ENCODE measurements at regions of chr1 and their contacts with region 1.

Region 1: DNA sequence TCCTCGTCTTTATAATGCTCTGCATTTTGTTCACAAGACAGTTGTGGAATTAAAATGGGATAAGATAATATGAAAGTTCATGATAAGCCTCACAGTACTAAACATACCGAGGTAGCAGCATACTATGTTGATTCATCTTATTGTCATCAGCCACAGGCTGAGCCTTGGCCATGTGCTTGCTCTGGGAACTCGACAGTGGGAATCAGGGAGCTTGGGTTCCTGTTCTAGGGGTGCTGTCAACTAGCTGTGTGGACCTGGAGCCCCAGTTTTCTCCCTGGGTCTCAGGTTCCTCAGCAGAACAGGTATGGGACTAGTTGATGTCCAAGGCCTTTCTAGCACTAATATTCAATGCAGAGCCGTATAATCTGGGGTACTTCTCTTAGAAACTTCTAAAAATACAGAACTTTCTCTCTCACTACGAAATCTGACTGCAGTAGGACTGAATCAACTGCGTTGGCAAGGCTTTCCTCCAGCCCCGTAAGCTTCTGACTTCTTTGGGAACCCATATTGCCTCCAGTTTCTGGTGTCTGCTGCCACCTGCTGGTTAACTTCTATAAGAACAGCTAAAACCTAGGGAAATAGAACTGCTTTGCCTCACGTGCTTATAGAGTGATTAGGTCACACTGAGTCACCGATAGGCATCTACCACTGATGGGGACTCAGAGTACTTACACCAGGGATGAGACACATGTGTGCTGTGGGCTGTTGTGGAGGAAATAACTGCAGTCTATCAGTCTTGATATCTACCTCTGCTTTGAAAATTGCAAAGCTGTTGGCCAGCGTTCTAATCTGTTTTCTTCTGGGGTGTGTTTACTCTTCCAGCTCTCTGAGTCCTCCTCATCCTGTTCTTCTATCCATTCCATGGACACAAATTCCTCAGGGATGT is 110.9 kb downstream of the RGL1 start:
- DNase-seq: peak; percentile 83
- ATAC-seq: peak; percentile 53
- H3K4me3 ChIP-seq: no peak overlapping the region
- H3K4me3 Mint-ChIP-seq: no peak overlapping the region
- H3K27ac ChIP-seq: no peak overlapping the region
- H3K27ac Mint-ChIP-seq: peak overlapping the region; percentile 22
- H3K4me1 ChIP-seq: peaks cover 20 to 24% of the 10 kb centered on the region in 2 donors
- H3K4me1 Mint-ChIP-seq: peaks cover 30% of the 10 kb centered on the region
- H3K27me3 ChIP-seq: peaks cover 0 to 3% (median 0%) of the 10 kb centered on the region in 4 experiments
- H3K27me3 Mint-ChIP-seq: no peaks in the 10 kb centered on the region
- CTCF ChIP-seq: peak; percentile 93

Region 2: GRCh38 chr1:183281553-183282091 is 634.2 kb before region 1 on chr1:
- CTCF ChIA-PET with region 1: interaction called, 8 read pairs
- POLR2A ChIA-PET with region 1: no interaction called
- intact Hi-C with region 1: loop called (anchors 5 kb)
- DNase-seq: peak; percentile 74
- ATAC-seq: peak; percentile 79
- H3K4me3 ChIP-seq: no peak overlapping the region
- H3K4me3 Mint-ChIP-seq: no peak overlapping the region
- H3K27ac ChIP-seq: no peak overlapping the region
- H3K27ac Mint-ChIP-seq: no peak overlapping the region
- H3K4me1 ChIP-seq: no peaks in the 10 kb centered on the region
- H3K4me1 Mint-ChIP-seq: no peaks in the 10 kb centered on the region
- H3K27me3 ChIP-seq: peaks cover 0 to 4% (median 0%) of the 10 kb centered on the region in 4 experiments
- H3K27me3 Mint-ChIP-seq: peaks cover 21% of the 10 kb centered on the region
- CTCF ChIP-seq: peak; percentile 86

Region 3: GRCh38 chr1:183635606-183636333 is 280.1 kb before region 1 on chr1 and contains the start of gene ARPC5:
- CTCF ChIA-PET with region 1: interaction called, 12 read pairs
- POLR2A ChIA-PET with region 1: interaction called, 3 read pairs
- intact Hi-C with region 1: loop called (anchors 2 kb)
- DNase-seq: peak; percentile 98
- ATAC-seq: peak; percentile 88
- H3K4me3 ChIP-seq: peak within 1 kb of the TSS; percentile 83 to 95 (median 87)
- H3K4me3 Mint-ChIP-seq: peak within 1 kb of the TSS; percentile 100
- H3K27ac ChIP-seq: peak within 1 kb of the TSS; percentile 59 to 80
- H3K27ac Mint-ChIP-seq: peak within 1 kb of the TSS; percentile 99
- H3K4me1 ChIP-seq: peaks cover 20 to 34% of the 10 kb centered on the region in 2 donors
- H3K4me1 Mint-ChIP-seq: peaks cover 42% of the 10 kb centered on the region
- H3K27me3 ChIP-seq: no peaks in the 10 kb centered on the region
- H3K27me3 Mint-ChIP-seq: no peaks in the 10 kb centered on the region
- CTCF ChIP-seq: no peak
- total RNA-seq, gene ARPC5: 91.9 and 103 TPM in 2 replicates

Region 4: GRCh38 chr1:183685112-183685713 is 230.7 kb before region 1 on chr1:
- CTCF ChIA-PET with region 1: interaction called, 105 read pairs
- POLR2A ChIA-PET with region 1: no interaction called
- intact Hi-C with region 1: loop called (anchors 10 kb)
- DNase-seq: peak; percentile 62
- ATAC-seq: peak; percentile 36
- H3K4me3 ChIP-seq: no peak overlapping the region
- H3K4me3 Mint-ChIP-seq: no peak overlapping the region
- H3K27ac ChIP-seq: no peak overlapping the region
- H3K27ac Mint-ChIP-seq: no peak overlapping the region
- H3K4me1 ChIP-seq: no peaks in the 10 kb centered on the region
- H3K4me1 Mint-ChIP-seq: no peaks in the 10 kb centered on the region
- H3K27me3 ChIP-seq: no peaks in the 10 kb centered on the region
- H3K27me3 Mint-ChIP-seq: peaks cover 15% of the 10 kb centered on the region
- CTCF ChIP-seq: peak; percentile 92

Region 5: GRCh38 chr1:183891158-183891856 is 24.6 kb before region 1 on chr1:
- CTCF ChIA-PET with region 1: interaction called, 40 read pairs
- POLR2A ChIA-PET with region 1: no interaction called
- intact Hi-C with region 1: no loop called
- DNase-seq: no peak
- ATAC-seq: no peak
- H3K4me3 ChIP-seq: no peak overlapping the region
- H3K4me3 Mint-ChIP-seq: no peak overlapping the region
- H3K27ac ChIP-seq: no peak overlapping the region
- H3K27ac Mint-ChIP-seq: no peak overlapping the region
- H3K4me1 ChIP-seq: peaks cover 0 to under 1% of the 10 kb centered on the region in 2 donors
- H3K4me1 Mint-ChIP-seq: peaks cover 2% of the 10 kb centered on the region
- H3K27me3 ChIP-seq: no peaks in the 10 kb centered on the region
- H3K27me3 Mint-ChIP-seq: peaks cover 13% of the 10 kb centered on the region
- CTCF ChIP-seq: no peak

Region 6: DNA sequence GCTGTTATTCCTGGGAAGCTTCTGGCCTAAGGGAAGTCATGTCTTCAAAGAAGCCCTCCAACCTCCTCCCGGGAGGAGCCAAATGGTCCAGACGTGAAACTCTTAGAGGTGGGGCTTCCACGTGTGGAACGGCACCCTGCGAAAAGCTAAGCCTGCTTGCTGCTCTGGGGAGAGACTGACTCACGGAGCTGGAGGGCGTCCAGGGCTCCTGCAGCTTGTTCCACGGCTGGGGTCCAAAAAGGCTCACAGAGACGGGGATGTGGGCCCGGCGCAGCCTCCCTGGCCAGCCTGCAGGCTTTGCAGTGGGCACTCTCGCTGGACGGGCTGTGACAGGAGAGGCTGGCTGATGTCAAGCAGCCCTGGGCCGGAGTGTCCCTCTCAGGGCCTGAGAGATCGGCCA is 16.5 kb after region 1 on chr1:
- CTCF ChIA-PET with region 1: interaction called, 20 read pairs
- POLR2A ChIA-PET with region 1: no interaction called
- intact Hi-C with region 1: no loop called
- DNase-seq: no peak
- ATAC-seq: no peak
- H3K4me3 ChIP-seq: no peak overlapping the region
- H3K4me3 Mint-ChIP-seq: no peak overlapping the region
- H3K27ac ChIP-seq: no peak overlapping the region
- H3K27ac Mint-ChIP-seq: no peak overlapping the region
- H3K4me1 ChIP-seq: no peaks in the 10 kb centered on the region
- H3K4me1 Mint-ChIP-seq: no peaks in the 10 kb centered on the region
- H3K27me3 ChIP-seq: no peaks in the 10 kb centered on the region
- H3K27me3 Mint-ChIP-seq: peaks cover 15% of the 10 kb centered on the region
- CTCF ChIP-seq: no peak